A673 (cell line): ENCODE measurements at regions of chr10 and their contacts with region 1.

Region 1: DNA sequence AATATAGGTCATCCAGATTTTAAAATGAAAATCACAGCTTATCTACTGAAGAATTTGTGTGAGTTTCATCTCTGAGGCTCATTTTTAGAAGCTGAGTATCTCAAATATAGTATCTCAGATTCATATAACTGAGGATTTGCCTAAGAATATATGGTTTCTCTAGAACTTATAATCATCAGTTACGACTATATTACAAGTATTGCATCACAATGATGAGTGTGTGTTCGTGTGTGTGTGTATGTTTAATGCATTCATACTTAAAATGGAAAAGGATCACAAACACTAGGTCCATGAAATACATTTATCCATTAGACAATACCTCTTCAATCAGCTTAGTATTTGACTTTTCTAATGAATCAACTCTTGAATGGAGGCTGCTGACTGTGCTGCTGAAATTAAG is 21.3 kb downstream of the RUFY2 start:
- DNase-seq: no peak
- H3K4me3 ChIP-seq: no peak overlapping the region
- H3K27ac ChIP-seq: no peak overlapping the region
- H3K4me1 ChIP-seq: no peaks in the 10 kb centered on the region
- H3K27me3 ChIP-seq: no peaks in the 10 kb centered on the region
- CTCF ChIP-seq: no peak

Region 2: DNA sequence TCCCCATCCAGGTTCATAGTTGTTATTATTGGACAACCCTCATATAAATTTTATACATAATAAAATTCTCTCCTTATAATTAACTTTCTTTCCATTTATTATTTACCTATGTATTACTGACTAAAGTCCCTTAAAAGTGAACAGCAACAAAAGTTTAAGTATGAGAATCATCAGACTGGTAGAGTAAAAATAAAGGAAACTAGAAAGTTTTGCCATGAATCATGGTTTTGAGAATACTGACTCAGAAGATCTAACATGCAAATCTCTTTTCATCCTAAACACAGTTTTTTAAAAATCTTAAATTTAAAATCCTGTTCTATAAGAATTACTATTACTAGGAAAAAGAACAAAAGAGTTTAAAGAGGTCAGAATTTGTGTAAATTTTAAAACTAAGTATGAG is 342.7 kb before region 1 on chr10:
- CTCF ChIA-PET with region 1: no interaction called
- POLR2A ChIA-PET with region 1: no interaction called
- intact Hi-C with region 1: no loop called
- DNase-seq: no peak
- H3K4me3 ChIP-seq: no peak overlapping the region
- H3K27ac ChIP-seq: no peak overlapping the region
- H3K4me1 ChIP-seq: peaks cover 4% of the 10 kb centered on the region
- H3K27me3 ChIP-seq: no peaks in the 10 kb centered on the region
- CTCF ChIP-seq: no peak

Region 3: DNA sequence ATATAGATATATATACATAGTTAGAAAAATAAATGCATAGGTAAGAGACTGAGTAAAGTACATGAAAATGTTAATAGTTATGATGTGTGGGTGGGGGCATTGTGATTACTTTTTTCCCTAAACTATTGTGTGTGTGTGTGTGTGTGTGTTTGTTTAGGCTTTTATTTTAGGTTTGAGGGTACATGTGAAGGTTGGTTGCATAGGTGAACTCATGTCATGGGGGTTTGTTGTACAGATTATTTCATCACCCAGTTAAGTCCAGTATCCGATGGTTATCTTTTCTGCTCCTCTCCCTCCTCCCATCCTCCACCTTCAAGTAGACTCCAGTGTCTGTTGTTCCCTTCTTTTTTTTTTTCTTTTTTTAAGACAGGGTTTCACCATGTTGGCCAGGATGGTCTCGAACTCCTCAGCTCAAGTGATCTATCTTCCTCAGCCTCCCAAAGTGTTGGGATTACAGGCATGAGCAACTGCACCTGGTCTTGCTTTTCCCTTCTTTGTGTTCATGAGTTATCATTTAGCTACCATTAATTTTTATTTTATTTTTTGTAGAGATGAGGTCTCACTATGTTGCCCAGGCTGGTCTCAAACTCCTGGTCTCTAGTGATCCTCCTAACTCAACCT is 23.3 kb after region 1 on chr10:
- CTCF ChIA-PET with region 1: no interaction called
- POLR2A ChIA-PET with region 1: interaction called, 15 read pairs
- intact Hi-C with region 1: no loop called
- DNase-seq: no peak
- H3K4me3 ChIP-seq: no peak overlapping the region
- H3K27ac ChIP-seq: no peak overlapping the region
- H3K4me1 ChIP-seq: peaks cover 6% of the 10 kb centered on the region
- H3K27me3 ChIP-seq: no peaks in the 10 kb centered on the region
- CTCF ChIP-seq: no peak

Region 4: GRCh38 chr10:68446179-68446578 is 60.4 kb after region 1 on chr10:
- CTCF ChIA-PET with region 1: no interaction called
- POLR2A ChIA-PET with region 1: no interaction called
- intact Hi-C with region 1: no loop called
- DNase-seq: no peak
- H3K4me3 ChIP-seq: no peak overlapping the region
- H3K27ac ChIP-seq: no peak overlapping the region
- H3K4me1 ChIP-seq: no peaks in the 10 kb centered on the region
- H3K27me3 ChIP-seq: no peaks in the 10 kb centered on the region
- CTCF ChIP-seq: no peak